Endothelial cell of umbilical vein (primary cell): ENCODE measurements at regions of chr9 and their contacts with region 1.

Region 1: DNA sequence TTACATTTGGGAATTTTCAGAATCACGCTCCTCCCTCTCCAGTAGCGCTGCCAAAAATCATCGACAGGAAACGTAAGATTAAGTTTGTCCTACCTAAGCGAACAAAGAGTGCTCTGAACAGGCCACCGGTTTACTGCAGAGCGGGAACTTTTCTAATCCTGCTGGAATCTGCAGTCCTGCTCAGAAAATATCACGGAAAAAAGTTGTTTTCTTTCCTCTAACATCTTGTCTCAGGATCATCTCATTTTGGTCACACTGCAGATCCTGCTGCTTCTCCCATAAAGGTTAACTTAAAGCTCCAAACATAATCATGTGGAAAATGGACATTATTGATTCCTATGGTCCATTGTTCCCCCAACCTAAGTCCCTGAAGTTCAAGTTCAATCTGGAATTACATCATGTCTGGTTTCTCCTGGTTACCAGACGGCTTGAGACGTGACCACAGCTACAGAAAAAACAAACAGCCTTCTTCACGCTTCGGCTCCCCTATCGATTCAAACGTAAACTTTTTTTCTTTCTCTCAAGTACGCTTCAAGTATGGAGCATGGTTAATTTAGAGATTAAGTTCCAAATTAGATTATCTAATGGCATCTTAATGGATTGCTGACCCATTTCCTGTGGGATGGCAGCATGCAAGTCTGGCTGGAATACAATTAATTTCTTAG is 217.6 kb downstream of the NFIB start:
- DNase-seq: peak; percentile 97
- H3K4me3 ChIP-seq: peak overlapping the region in 1 of 3 experiments; percentile 60
- H3K27ac ChIP-seq: peak overlapping the region; percentile 96
- H3K4me1 ChIP-seq: peaks cover 55% of the 10 kb centered on the region
- H3K27me3 ChIP-seq: no peaks in the 10 kb centered on the region
- CTCF ChIP-seq: no peak
- POLR2A ChIP-seq: peak; percentile 44

Region 2: GRCh38 chr9:13446938-13447842 is 649.2 kb before region 1 on chr9:
- CTCF ChIA-PET with region 1: interaction called, 3 read pairs
- POLR2A ChIA-PET with region 1: no interaction called
- dilution Hi-C with region 1: no loop called
- intact Hi-C with region 1: loop called (anchors 5 kb)
- DNase-seq: peak; percentile 63
- H3K4me3 ChIP-seq: peak overlapping the region in 1 of 3 experiments; percentile 18
- H3K27ac ChIP-seq: no peak overlapping the region
- H3K4me1 ChIP-seq: peaks cover 14% of the 10 kb centered on the region
- H3K27me3 ChIP-seq: no peaks in the 10 kb centered on the region
- CTCF ChIP-seq: no peak
- POLR2A ChIP-seq: no peak

Region 3: DNA sequence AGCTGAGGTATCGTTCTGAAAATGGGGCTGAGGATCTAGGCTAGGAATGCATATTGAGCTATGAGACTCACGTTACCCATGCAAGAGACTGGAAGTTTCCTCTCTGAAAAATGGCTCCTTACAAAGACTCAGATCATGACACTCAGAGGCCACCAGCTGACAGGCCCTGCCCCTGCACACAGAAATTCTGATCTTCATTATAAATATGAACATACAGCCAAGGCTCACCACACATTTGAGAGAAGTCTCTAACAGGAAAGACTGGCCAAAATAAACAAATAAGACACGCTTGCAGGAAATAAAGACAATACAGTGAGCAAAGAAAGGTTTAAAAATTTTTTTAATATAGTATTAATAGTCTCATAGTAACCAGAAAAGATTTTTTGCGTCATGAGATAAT is 148.4 kb before region 1 on chr9:
- CTCF ChIA-PET with region 1: no interaction called
- POLR2A ChIA-PET with region 1: no interaction called
- dilution Hi-C with region 1: no loop called
- intact Hi-C with region 1: loop called (anchors 5 kb)
- DNase-seq: peak; percentile 68
- H3K4me3 ChIP-seq: no peak overlapping the region
- H3K27ac ChIP-seq: peak overlapping the region; percentile 47
- H3K4me1 ChIP-seq: peaks cover 18% of the 10 kb centered on the region
- H3K27me3 ChIP-seq: no peaks in the 10 kb centered on the region
- CTCF ChIP-seq: no peak
- POLR2A ChIP-seq: no peak

Region 4: GRCh38 chr9:13971966-13972655 is 124.3 kb before region 1 on chr9:
- CTCF ChIA-PET with region 1: no interaction called
- POLR2A ChIA-PET with region 1: no interaction called
- dilution Hi-C with region 1: no loop called
- intact Hi-C with region 1: no loop called
- DNase-seq: peak; percentile 36
- H3K4me3 ChIP-seq: no peak overlapping the region
- H3K27ac ChIP-seq: no peak overlapping the region
- H3K4me1 ChIP-seq: peaks cover 22% of the 10 kb centered on the region
- H3K27me3 ChIP-seq: no peaks in the 10 kb centered on the region
- CTCF ChIP-seq: no peak
- POLR2A ChIP-seq: no peak

Region 5: GRCh38 chr9:14156046-14156445 is 59.7 kb after region 1 on chr9:
- CTCF ChIA-PET with region 1: no interaction called
- POLR2A ChIA-PET with region 1: no interaction called
- dilution Hi-C with region 1: no loop called
- intact Hi-C with region 1: loop called (anchors 1 kb)
- DNase-seq: no peak
- H3K4me3 ChIP-seq: no peak overlapping the region
- H3K27ac ChIP-seq: peak overlapping the region; percentile 77
- H3K4me1 ChIP-seq: peaks cover 62% of the 10 kb centered on the region
- H3K27me3 ChIP-seq: no peaks in the 10 kb centered on the region
- CTCF ChIP-seq: no peak
- POLR2A ChIP-seq: no peak

Region 6: GRCh38 chr9:14170973-14171596 is 74.7 kb after region 1 on chr9:
- CTCF ChIA-PET with region 1: no interaction called
- POLR2A ChIA-PET with region 1: no interaction called
- dilution Hi-C with region 1: no loop called
- intact Hi-C with region 1: no loop called
- DNase-seq: peak; percentile 43
- H3K4me3 ChIP-seq: no peak overlapping the region
- H3K27ac ChIP-seq: peak overlapping the region; percentile 20
- H3K4me1 ChIP-seq: peaks cover 11% of the 10 kb centered on the region
- H3K27me3 ChIP-seq: no peaks in the 10 kb centered on the region
- CTCF ChIP-seq: no peak
- POLR2A ChIP-seq: no peak

Region 7: GRCh38 chr9:14271093-14271673 is 174.8 kb after region 1 on chr9:
- CTCF ChIA-PET with region 1: interaction called, 3 read pairs
- POLR2A ChIA-PET with region 1: no interaction called
- dilution Hi-C with region 1: no loop called
- intact Hi-C with region 1: loop called (anchors 2 kb)
- DNase-seq: peak; percentile 95
- H3K4me3 ChIP-seq: peak overlapping the region in 1 of 3 experiments; percentile 33
- H3K27ac ChIP-seq: peak overlapping the region; percentile 46
- H3K4me1 ChIP-seq: peaks cover 64% of the 10 kb centered on the region
- H3K27me3 ChIP-seq: no peaks in the 10 kb centered on the region
- CTCF ChIP-seq: no peak
- POLR2A ChIP-seq: no peak

Region 8: GRCh38 chr9:14341437-14342122 is 245.2 kb after region 1 on chr9:
- CTCF ChIA-PET with region 1: no interaction called
- POLR2A ChIA-PET with region 1: no interaction called
- dilution Hi-C with region 1: no loop called
- intact Hi-C with region 1: no loop called
- DNase-seq: peak; percentile 74
- H3K4me3 ChIP-seq: no peak overlapping the region
- H3K27ac ChIP-seq: no peak overlapping the region
- H3K4me1 ChIP-seq: peaks cover 15% of the 10 kb centered on the region
- H3K27me3 ChIP-seq: no peaks in the 10 kb centered on the region
- CTCF ChIP-seq: no peak
- POLR2A ChIP-seq: no peak

Region 9: GRCh38 chr9:14353222-14354056 is 257.0 kb after region 1 on chr9:
- CTCF ChIA-PET with region 1: interaction called, 8 read pairs
- POLR2A ChIA-PET with region 1: no interaction called
- dilution Hi-C with region 1: no loop called
- intact Hi-C with region 1: loop called (anchors 2 kb)
- DNase-seq: peak; percentile 89
- H3K4me3 ChIP-seq: no peak overlapping the region
- H3K27ac ChIP-seq: peak overlapping the region; percentile 2
- H3K4me1 ChIP-seq: peaks cover 45% of the 10 kb centered on the region
- H3K27me3 ChIP-seq: no peaks in the 10 kb centered on the region
- CTCF ChIP-seq: peak; percentile 95 to 97
- POLR2A ChIP-seq: no peak